ENCODE measurements at regions of chr20 and their contacts with region 1.

Region 1: DNA sequence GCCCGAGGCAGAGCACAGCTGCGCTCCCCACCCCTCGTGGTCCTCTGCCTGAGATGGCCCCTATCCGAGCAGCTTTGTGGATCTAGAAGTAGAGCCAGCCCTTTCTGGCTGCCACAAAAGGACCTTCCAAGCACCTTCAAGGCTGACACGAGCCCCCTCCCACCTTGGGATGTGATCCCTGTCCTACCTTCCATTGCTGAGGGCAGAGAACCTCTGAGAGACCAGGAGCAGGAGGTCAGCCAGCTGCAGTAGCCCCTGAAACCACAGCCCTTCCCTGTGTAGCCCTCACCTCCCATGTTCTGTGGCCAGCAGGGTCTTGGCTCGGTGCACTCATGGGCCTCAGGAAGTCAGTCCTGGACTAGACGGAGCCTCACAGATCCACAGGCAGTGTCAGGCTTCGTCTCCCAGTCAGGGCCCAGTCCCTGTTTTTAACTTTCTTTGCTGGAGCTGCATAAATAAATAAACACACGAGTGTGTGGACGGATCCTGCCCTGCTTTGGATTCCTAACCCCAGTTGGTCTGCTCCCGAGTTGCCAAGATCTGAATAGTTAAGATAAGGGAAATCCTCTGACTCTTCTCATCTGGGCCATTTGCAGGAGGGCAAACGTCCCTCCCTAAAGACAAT is 507.7 kb downstream of the PREX1 start:
- DNase-seq: no peak
- H3K4me3 ChIP-seq: no peak overlapping the region
- H3K27ac ChIP-seq: no peak overlapping the region
- H3K27me3 ChIP-seq: peaks cover 0 to 4% (median 0%) of the 10 kb centered on the region in 45 donors
- CTCF ChIP-seq: no peak

Region 2: GRCh38 chr20:47677635-47678453 is 642.2 kb before region 1 on chr20:
- intact Hi-C with region 1: loop called in 1 of 2 experiments (anchors 10 kb)
- DNase-seq: peak in 4 of 10 donors; percentile 25 to 65 (median 44)
- H3K4me3 ChIP-seq: no peak overlapping the region
- H3K27ac ChIP-seq: no peak overlapping the region
- H3K27me3 ChIP-seq: no peaks in the 10 kb centered on the region
- CTCF ChIP-seq: peak; percentile 40 to 85 (median 70)

Measured in dorsolateral prefrontal cortex (tissue), 120 donors.